ENCODE measurements at regions of chr5 and their contacts with region 1.

Region 1: DNA sequence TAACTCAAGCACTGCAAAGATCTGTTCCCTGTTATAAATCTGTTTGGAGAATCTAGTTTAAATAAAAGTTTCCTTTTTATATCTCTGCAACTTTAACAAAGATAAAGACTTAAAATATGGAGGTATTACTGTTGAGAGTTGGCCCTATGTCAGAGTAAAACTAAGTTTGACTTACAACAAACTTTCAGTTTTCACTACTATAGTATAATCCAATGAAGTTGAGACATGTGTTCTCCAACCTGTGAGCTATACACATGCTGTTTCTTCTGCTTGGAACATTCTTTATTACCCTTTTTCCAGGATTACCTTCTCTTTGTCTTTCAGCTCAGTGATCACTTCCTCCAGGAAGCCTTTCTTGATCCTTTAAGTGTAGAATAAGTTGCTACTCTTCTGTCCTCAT is 1109.3 kb downstream of the MAT2B start:
- DNase-seq: no peak
- H3K4me3 ChIP-seq: no peak overlapping the region
- H3K27ac ChIP-seq: no peak overlapping the region
- H3K4me1 ChIP-seq: no peaks in the 10 kb centered on the region
- H3K27me3 ChIP-seq: no peaks in the 10 kb centered on the region
- CTCF ChIP-seq: no peak

Region 2: DNA sequence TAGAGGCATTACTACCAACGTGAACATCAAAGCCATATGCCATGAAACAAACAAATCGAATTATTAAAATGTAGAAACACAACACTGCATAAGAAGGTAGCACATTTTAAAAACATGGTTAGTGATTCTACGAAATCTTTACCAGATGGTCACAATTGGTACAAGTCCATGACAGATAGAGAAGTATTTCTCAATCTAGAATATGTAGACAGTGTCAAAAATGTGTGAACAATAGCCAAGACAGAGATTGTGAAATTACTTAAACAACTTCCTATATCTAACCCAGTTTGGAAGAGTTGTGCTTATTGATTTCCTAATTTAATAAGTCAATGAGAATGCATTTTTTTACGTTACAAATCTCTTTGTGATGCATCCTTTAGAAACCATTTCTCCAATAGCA is 12.3 kb after region 1 on chr5:
- CTCF ChIA-PET with region 1: no interaction called
- POLR2A ChIA-PET with region 1: no interaction called
- intact Hi-C with region 1: loop called (anchors 1 kb)
- DNase-seq: no peak
- H3K4me3 ChIP-seq: no peak overlapping the region
- H3K27ac ChIP-seq: no peak overlapping the region
- H3K4me1 ChIP-seq: no peaks in the 10 kb centered on the region
- H3K27me3 ChIP-seq: no peaks in the 10 kb centered on the region
- CTCF ChIP-seq: no peak

Measured in PC-9 (cell line).